ENCODE measurements at regions of chr5 and their contacts with region 1.

Region 1: GRCh38 chr5:149162401-149163084 is 21.2 kb downstream of the ABLIM3 start:
- DNase-seq: peak; percentile 48 to 60
- H3K4me3 ChIP-seq: no peak overlapping the region
- H3K27ac ChIP-seq: peak overlapping the region; percentile 75
- H3K4me1 ChIP-seq: peaks cover 28% of the 10 kb centered on the region
- H3K27me3 ChIP-seq: no peaks in the 10 kb centered on the region
- CTCF ChIP-seq: no peak

Region 2: GRCh38 chr5:148910686-148911361 is 251.7 kb before region 1 on chr5:
- CTCF ChIA-PET with region 1: no interaction called
- POLR2A ChIA-PET with region 1: no interaction called
- intact Hi-C with region 1: no loop called
- DNase-seq: peak; percentile 93 to 96
- H3K4me3 ChIP-seq: no peak overlapping the region
- H3K27ac ChIP-seq: peak overlapping the region; percentile 98
- H3K4me1 ChIP-seq: peaks cover 79% of the 10 kb centered on the region
- H3K27me3 ChIP-seq: no peaks in the 10 kb centered on the region
- CTCF ChIP-seq: no peak

Region 3: DNA sequence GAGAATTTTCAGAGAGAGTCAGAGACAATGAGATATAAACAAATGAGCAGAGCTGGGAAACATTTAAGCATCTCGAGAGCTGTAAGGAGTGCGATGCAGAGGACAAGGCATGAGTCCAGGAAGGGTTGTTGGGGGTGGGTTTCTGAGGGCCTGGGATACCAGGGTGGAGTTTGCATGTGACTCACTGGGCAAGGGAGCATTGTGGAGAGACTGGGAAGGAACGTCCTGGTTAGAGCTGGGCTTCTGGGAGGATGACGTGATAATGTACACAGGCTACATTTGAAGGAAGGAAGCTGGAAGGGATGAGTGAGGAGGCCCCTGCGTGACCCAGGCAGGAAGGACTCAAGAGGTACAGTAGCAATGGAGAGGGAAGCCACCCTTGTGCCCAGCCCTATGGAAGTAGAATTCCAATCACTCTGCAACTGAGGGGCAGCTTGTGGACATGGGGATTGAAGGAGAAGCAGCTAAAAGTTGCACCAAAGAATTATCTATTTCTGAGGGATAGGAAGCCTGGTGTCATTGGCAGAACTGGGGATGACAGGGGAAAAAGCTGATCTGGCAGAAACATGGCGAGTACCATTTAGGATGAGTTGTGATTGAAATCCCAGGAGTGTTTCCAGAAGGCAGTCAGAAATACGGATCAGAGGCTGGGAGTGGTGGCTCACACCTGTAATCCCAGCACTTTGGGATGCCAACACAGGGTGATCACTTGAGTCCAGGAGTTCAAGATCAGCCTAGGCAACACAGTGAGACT is 49.8 kb after region 1 on chr5:
- CTCF ChIA-PET with region 1: no interaction called
- POLR2A ChIA-PET with region 1: no interaction called
- intact Hi-C with region 1: loop called (anchors 5 kb)
- DNase-seq: peak in 1 of 2 experiments; percentile 57
- H3K4me3 ChIP-seq: no peak overlapping the region
- H3K27ac ChIP-seq: no peak overlapping the region
- H3K4me1 ChIP-seq: peaks cover 9% of the 10 kb centered on the region; the same call in 1 of the 2 replicates
- H3K27me3 ChIP-seq: no peaks in the 10 kb centered on the region
- CTCF ChIP-seq: no peak